Posterior vena cava (tissue), 2 donors: ENCODE measurements at regions of chr19 and their contacts with region 1.

Region 1: GRCh38 chr19:29714953-29715700 is at the start of gene C19orf12:
- DNase-seq: peak; percentile 88
- total RNA-seq, gene C19orf12: 26.7 to 29.8 TPM

Region 2: DNA sequence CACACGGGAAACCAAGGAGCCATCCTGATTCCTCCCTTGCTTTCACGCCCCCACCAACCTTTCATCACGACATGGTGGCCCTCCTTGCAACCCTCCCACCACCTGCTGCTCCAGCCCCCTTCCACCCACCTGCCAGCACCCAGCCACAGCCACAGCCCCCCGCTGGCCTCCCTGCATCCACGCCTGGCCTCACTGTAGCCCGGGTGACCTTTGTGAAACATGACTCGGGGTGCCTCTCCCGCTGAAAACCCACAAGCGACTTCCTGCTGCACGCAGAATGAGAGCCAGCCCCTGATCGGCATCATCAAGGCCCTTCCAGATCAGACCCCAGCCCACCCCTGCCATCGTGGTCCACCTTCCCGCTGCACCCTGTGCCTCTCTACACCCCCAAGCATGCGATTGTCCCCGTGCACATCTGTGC is 94.2 kb before region 1 on chr19:
- intact Hi-C with region 1: no loop called
- DNase-seq: no peak

Region 3: GRCh38 chr19:29651622-29652394 is 63.3 kb before region 1 on chr19:
- intact Hi-C with region 1: no loop called
- DNase-seq: no peak

Region 4: GRCh38 chr19:29665215-29665825 is 49.8 kb before region 1 on chr19 and contains the start of gene PLEKHF1:
- intact Hi-C with region 1: loop called in 1 of 2 experiments (anchors 5 kb)
- DNase-seq: peak; percentile 96
- total RNA-seq, gene PLEKHF1: 20.7 to 21.0 TPM

Region 5: GRCh38 chr19:29680447-29680846 is 34.7 kb before region 1 on chr19:
- intact Hi-C with region 1: no loop called
- DNase-seq: peak; percentile 86